ENCODE measurements at regions of chr3 and their contacts with region 1.

Region 1: GRCh38 chr3:149969940-149970715 is 567 bp downstream of the PFN2 start:
- DNase-seq: peak; percentile 79
- H3K4me3 Mint-ChIP-seq: peak overlapping the region; percentile 87
- H3K27ac Mint-ChIP-seq: peak overlapping the region; percentile 30
- H3K4me1 Mint-ChIP-seq: peaks cover 11% of the 10 kb centered on the region
- H3K27me3 Mint-ChIP-seq: peaks cover 20% of the 10 kb centered on the region

Region 2: GRCh38 chr3:149752051-149752787 is 217.9 kb before region 1 on chr3 and contains the start of gene COMMD2:
- CTCF ChIA-PET with region 1: no interaction called
- intact Hi-C with region 1: loop called (anchors 5 kb)
- DNase-seq: peak; percentile 89
- H3K4me3 Mint-ChIP-seq: peak within 1 kb of the TSS; percentile 96
- H3K27ac Mint-ChIP-seq: peak within 1 kb of the TSS; percentile 87
- H3K4me1 Mint-ChIP-seq: peaks cover 26% of the 10 kb centered on the region
- H3K27me3 Mint-ChIP-seq: no peaks in the 10 kb centered on the region
- total RNA-seq, gene COMMD2: 27.3 to 28.0 TPM

Region 3: GRCh38 chr3:149879872-149880271 is 90.3 kb before region 1 on chr3:
- CTCF ChIA-PET with region 1: interaction called, 3 read pairs
- intact Hi-C with region 1: loop called (anchors 5 kb)
- DNase-seq: peak; percentile 61
- H3K4me3 Mint-ChIP-seq: no peak overlapping the region
- H3K27ac Mint-ChIP-seq: no peak overlapping the region
- H3K4me1 Mint-ChIP-seq: peaks cover 4% of the 10 kb centered on the region
- H3K27me3 Mint-ChIP-seq: no peaks in the 10 kb centered on the region

Region 4: GRCh38 chr3:149958171-149958796 is 11.8 kb before region 1 on chr3:
- CTCF ChIA-PET with region 1: interaction called, 14 read pairs
- intact Hi-C with region 1: no loop called
- DNase-seq: peak; percentile 17
- H3K4me3 Mint-ChIP-seq: no peak overlapping the region
- H3K27ac Mint-ChIP-seq: peak overlapping the region; percentile 6
- H3K4me1 Mint-ChIP-seq: peaks cover 16% of the 10 kb centered on the region
- H3K27me3 Mint-ChIP-seq: no peaks in the 10 kb centered on the region

Region 5: GRCh38 chr3:150220799-150221198 is 250.7 kb after region 1 on chr3:
- CTCF ChIA-PET with region 1: interaction called, 17 read pairs
- intact Hi-C with region 1: loop called (anchors 1 kb)
- DNase-seq: no peak
- H3K4me3 Mint-ChIP-seq: no peak overlapping the region
- H3K27ac Mint-ChIP-seq: no peak overlapping the region
- H3K4me1 Mint-ChIP-seq: peaks cover 2% of the 10 kb centered on the region
- H3K27me3 Mint-ChIP-seq: peaks cover 23% of the 10 kb centered on the region

Region 6: DNA sequence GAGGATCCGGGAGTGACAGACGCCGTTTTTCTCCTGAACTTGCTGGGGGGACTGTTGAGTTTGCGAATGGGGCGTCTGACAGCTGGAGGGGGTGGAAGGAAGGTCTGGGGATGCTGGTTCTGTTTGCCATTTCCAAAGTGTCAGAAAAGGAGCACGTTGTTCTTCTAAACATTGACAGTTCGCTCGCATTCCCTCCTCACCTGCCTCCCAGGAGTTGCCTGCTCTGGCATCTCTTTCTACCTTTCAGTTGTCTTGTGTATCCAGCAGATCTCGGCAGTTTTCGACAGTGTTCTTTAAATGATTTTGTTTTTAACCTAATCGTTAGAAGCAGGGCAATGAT is 633.8 kb after region 1 on chr3:
- CTCF ChIA-PET with region 1: no interaction called
- intact Hi-C with region 1: no loop called
- DNase-seq: no peak
- H3K4me3 Mint-ChIP-seq: peak overlapping the region; percentile 96
- H3K27ac Mint-ChIP-seq: peak overlapping the region; percentile 97
- H3K4me1 Mint-ChIP-seq: peaks cover 64% of the 10 kb centered on the region
- H3K27me3 Mint-ChIP-seq: no peaks in the 10 kb centered on the region

Measured in activated naive CD4-positive, alpha-beta T cell treated with anti-CD3 and anti-CD28 coated beads for 36 hours (primary cell).